Breast epithelium (tissue), 4 donors: ENCODE measurements at regions of chr15 and their contacts with region 1.

Region 1: GRCh38 chr15:55742927-55743728 is at the start of gene PRTG:
- DNase-seq: peak in 1 of 2 donors; percentile 71
- H3K4me3 ChIP-seq: peak within 1 kb of the TSS; percentile 72 to 96 (median 76)
- H3K27ac ChIP-seq: peak within 1 kb of the TSS; percentile 65 to 90
- H3K4me1 ChIP-seq: peaks cover 0 to 7% of the 10 kb centered on the region in 2 donors
- H3K27me3 ChIP-seq: no peaks in the 10 kb centered on the region
- CTCF ChIP-seq: no peak
- POLR2A ChIP-seq: no peak
- total RNA-seq, gene PRTG: 5.2 to 11.6 (median 5.8) TPM

Region 2: GRCh38 chr15:53918180-53919042 is 1824.7 kb before region 1 on chr15:
- intact Hi-C with region 1: loop called (anchors 10 kb)
- DNase-seq: no peak
- H3K4me3 ChIP-seq: no peak overlapping the region
- H3K27ac ChIP-seq: no peak overlapping the region
- H3K4me1 ChIP-seq: no peaks in the 10 kb centered on the region
- H3K27me3 ChIP-seq: no peaks in the 10 kb centered on the region
- CTCF ChIP-seq: no peak
- POLR2A ChIP-seq: no peak